Breast epithelium (tissue), 4 donors: ENCODE measurements at regions of chr1 and their contacts with region 1.

Region 1: GRCh38 chr1:41626616-41627375 is 142.3 kb upstream of the EDN2 start:
- DNase-seq: no peak
- H3K4me3 ChIP-seq: no peak overlapping the region
- H3K27ac ChIP-seq: peak overlapping the region; percentile 10 to 45
- H3K4me1 ChIP-seq: peaks cover 2 to 6% of the 10 kb centered on the region in 2 donors
- H3K27me3 ChIP-seq: no peaks in the 10 kb centered on the region
- CTCF ChIP-seq: no peak
- POLR2A ChIP-seq: no peak

Region 2: GRCh38 chr1:41296506-41296905 is 330.3 kb before region 1 on chr1:
- intact Hi-C with region 1: loop called (anchors 5 kb)
- DNase-seq: no peak
- H3K4me3 ChIP-seq: no peak overlapping the region
- H3K27ac ChIP-seq: no peak overlapping the region
- H3K4me1 ChIP-seq: no peaks in the 10 kb centered on the region
- H3K27me3 ChIP-seq: no peaks in the 10 kb centered on the region
- CTCF ChIP-seq: no peak
- POLR2A ChIP-seq: no peak

Region 3: DNA sequence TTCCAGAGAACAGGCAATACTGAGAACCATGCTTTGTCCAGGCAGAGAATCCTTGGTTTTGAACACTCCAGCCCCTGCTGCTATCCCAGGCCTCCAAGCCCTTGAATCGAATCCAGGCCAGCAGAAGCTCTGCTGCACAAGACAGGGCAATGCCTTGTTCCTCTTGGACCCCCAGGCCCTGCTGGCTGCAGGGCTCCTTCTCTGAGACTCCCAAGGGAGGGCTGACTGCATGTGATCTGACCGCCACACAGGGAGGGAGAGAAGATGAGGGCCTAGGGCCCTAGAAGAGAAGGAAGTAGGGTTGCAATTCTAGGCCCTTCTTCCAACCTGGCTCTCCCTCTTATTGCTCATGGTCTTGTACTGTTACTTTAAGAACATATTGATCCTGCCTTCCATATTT is 18.3 kb after region 1 on chr1:
- intact Hi-C with region 1: loop called (anchors 1 kb)
- DNase-seq: no peak
- H3K4me3 ChIP-seq: no peak overlapping the region
- H3K27ac ChIP-seq: no peak overlapping the region
- H3K4me1 ChIP-seq: no peaks in the 10 kb centered on the region
- H3K27me3 ChIP-seq: no peaks in the 10 kb centered on the region
- CTCF ChIP-seq: no peak
- POLR2A ChIP-seq: no peak

Region 4: GRCh38 chr1:41666981-41667631 is 40.3 kb after region 1 on chr1:
- intact Hi-C with region 1: no loop called
- DNase-seq: peak in 1 of 2 donors; percentile 60
- H3K4me3 ChIP-seq: no peak overlapping the region
- H3K27ac ChIP-seq: peak overlapping the region; percentile 97 to 98
- H3K4me1 ChIP-seq: peaks cover 9 to 25% of the 10 kb centered on the region in 2 donors
- H3K27me3 ChIP-seq: no peaks in the 10 kb centered on the region
- CTCF ChIP-seq: no peak
- POLR2A ChIP-seq: no peak